Psoas muscle (tissue), 8 donors: ENCODE measurements at regions of chr18 and their contacts with region 1.

Region 1: GRCh38 chr18:12422936-12423335 is 15.2 kb downstream of the PRELID3A start:
- DNase-seq: no peak
- ATAC-seq: peak in 3 of 4 donors; percentile 42 to 58 (median 48)
- H3K4me3 ChIP-seq: no peak overlapping the region
- H3K27ac ChIP-seq: no peak overlapping the region
- H3K4me1 ChIP-seq: no peaks in the 10 kb centered on the region
- H3K27me3 ChIP-seq: peaks cover 0 to 8% (median 8%) of the 10 kb centered on the region in 3 donors
- CTCF ChIP-seq: no peak

Region 2: GRCh38 chr18:12327510-12328178 is 95.3 kb before region 1 on chr18:
- intact Hi-C with region 1: no loop called
- DNase-seq: peak; percentile 85 to 90
- ATAC-seq: peak; percentile 89 to 95 (median 92)
- H3K4me3 ChIP-seq: no peak overlapping the region
- H3K27ac ChIP-seq: peak overlapping the region; percentile 30
- H3K4me1 ChIP-seq: peaks cover 10% of the 10 kb centered on the region
- H3K27me3 ChIP-seq: no peaks in the 10 kb centered on the region
- CTCF ChIP-seq: peak; percentile 76

Region 3: DNA sequence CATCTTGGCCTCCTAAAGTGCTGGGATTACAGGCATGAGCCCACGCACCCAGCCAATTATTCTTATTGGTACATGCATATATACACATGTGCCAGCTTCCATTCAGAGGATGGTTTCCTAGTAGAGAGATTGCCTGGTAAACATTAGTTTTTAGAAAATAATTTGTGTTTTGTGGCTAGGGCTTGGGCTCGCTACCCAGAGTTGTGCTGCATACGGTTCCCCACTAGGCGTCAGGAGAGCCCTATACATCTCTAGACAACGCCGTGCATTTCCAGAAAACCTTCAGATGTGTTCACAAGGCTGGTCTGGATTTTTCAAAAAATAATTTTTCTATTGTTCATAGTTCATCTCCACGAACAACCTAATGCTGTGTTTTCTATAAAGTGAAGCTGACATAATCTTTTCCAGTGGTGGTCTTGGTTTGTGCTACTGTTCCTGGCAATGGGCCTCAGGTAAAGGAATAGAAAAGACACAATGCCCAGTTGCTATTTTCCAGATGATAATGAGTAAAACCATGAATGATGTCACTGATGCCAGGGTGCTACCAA is 31.2 kb before region 1 on chr18:
- intact Hi-C with region 1: loop called in 1 of 2 experiments (anchors 1 kb)
- DNase-seq: peak; percentile 50 to 56
- ATAC-seq: peak; percentile 84 to 98 (median 91)
- H3K4me3 ChIP-seq: no peak overlapping the region
- H3K27ac ChIP-seq: no peak overlapping the region
- H3K4me1 ChIP-seq: no peaks in the 10 kb centered on the region
- H3K27me3 ChIP-seq: no peaks in the 10 kb centered on the region
- CTCF ChIP-seq: peak; percentile 91

Region 4: DNA sequence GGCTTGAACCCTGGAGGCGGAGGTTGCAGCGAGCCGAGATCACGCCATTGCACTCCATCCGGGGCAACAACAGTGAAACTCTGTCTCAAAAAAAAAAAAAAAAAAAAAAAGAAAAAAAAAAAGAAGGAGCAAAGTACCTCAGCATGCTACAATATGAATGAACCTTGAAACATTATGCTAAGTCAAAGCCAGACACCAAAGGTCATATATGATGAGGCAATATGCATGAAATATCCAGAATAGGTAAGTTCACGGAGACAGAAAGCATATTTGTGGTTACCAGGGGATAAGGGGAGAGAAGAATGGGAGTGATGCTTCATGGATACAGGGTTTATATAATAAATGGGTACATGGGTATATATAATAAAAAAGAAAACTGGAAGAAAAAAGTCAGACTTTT is 78.0 kb after region 1 on chr18:
- intact Hi-C with region 1: no loop called
- DNase-seq: no peak
- ATAC-seq: no peak
- H3K4me3 ChIP-seq: no peak overlapping the region
- H3K27ac ChIP-seq: no peak overlapping the region
- H3K4me1 ChIP-seq: no peaks in the 10 kb centered on the region
- H3K27me3 ChIP-seq: no peaks in the 10 kb centered on the region
- CTCF ChIP-seq: no peak